CD4-positive, alpha-beta T cell (primary cell): ENCODE measurements at regions of chr21 and their contacts with region 1.

Region 1: GRCh38 chr21:29018540-29018939 is 609 bp downstream of the RWDD2B start:
- DNase-seq: peak in 1 of 14 experiments; percentile 16
- ATAC-seq: peak; percentile 7
- H3K4me3 ChIP-seq: peak overlapping the region; percentile 94
- H3K4me3 Mint-ChIP-seq: peak overlapping the region; percentile 92
- H3K27ac ChIP-seq: peak overlapping the region; percentile 82 to 85
- H3K27ac Mint-ChIP-seq: peak overlapping the region; percentile 93
- H3K4me1 ChIP-seq: peaks cover 40% of the 10 kb centered on the region
- H3K4me1 Mint-ChIP-seq: peaks cover 35% of the 10 kb centered on the region
- H3K27me3 ChIP-seq: no peaks in the 10 kb centered on the region
- H3K27me3 Mint-ChIP-seq: no peaks in the 10 kb centered on the region
- CTCF ChIP-seq: no peak

Region 2: DNA sequence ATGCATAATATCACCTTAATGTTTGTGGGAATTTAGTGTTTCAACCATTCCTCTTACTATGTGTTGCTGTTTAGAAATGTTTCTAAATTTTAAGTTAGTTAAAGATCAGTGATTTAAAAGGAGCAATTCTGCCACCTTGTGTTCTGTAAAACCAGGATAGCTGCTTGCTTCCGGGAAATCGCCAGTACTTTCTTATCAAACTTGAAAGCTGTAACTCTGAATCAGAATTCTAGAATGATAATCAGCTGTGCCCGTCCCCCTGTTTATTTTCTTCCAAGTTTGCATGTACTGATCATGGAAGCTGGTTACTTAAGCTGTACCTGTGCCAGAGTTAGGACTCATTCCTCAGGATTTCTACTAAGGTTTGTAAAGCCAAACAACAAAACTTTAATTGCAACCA is 682.2 kb before region 1 on chr21:
- CTCF ChIA-PET with region 1: no interaction called
- POLR2A ChIA-PET with region 1: no interaction called
- intact Hi-C with region 1: no loop called
- DNase-seq: no peak
- ATAC-seq: no peak
- H3K4me3 ChIP-seq: no peak overlapping the region
- H3K4me3 Mint-ChIP-seq: no peak overlapping the region
- H3K27ac ChIP-seq: no peak overlapping the region
- H3K27ac Mint-ChIP-seq: no peak overlapping the region
- H3K4me1 ChIP-seq: no peaks in the 10 kb centered on the region
- H3K4me1 Mint-ChIP-seq: no peaks in the 10 kb centered on the region
- H3K27me3 ChIP-seq: no peaks in the 10 kb centered on the region
- H3K27me3 Mint-ChIP-seq: no peaks in the 10 kb centered on the region
- CTCF ChIP-seq: no peak

Region 3: DNA sequence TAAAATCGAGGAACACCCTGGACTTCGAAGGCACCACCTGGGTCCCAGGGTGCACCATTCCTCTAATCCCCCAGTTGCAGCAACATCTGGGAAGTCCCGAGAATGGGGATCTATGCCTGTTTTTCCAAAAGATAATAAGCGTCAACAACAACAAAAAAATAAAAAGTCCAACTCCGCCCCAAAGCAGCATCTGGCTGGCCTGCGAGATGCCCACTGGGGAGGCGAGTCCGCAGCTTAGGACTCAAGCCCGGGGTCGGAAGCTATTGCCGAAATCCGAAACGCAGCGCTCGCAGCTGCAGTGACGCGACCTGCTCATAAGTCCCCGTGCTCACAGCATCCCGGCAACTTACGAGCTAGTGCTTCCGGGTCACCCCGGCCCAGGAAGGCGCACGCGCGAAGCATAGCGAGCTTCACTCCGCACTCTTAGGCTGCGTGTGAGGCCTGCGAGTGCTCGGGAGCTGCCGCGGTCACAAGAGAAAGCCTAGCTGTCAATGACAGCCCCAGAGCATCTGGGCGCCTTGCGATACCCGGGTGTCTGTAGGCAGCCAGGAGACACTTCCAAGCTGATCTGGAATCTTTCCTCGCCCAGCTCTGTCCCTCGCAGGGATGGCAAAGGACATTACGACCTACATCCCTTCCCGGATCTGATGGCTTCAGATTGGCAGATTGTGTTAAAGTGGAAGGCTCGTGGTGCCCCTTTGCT is 15.9 kb before region 1 on chr21:
- CTCF ChIA-PET with region 1: interaction called, 3 read pairs
- POLR2A ChIA-PET with region 1: interaction called, 479 read pairs
- intact Hi-C with region 1: loop called (anchors 1 to 2 kb)
- DNase-seq: peak; percentile 91 to 99 (median 94)
- ATAC-seq: peak; percentile 100
- H3K4me3 ChIP-seq: peak overlapping the region; percentile 65
- H3K4me3 Mint-ChIP-seq: peak overlapping the region; percentile 88
- H3K27ac ChIP-seq: peak overlapping the region; percentile 88 to 95
- H3K27ac Mint-ChIP-seq: peak overlapping the region; percentile 97
- H3K4me1 ChIP-seq: peaks cover 13% of the 10 kb centered on the region
- H3K4me1 Mint-ChIP-seq: peaks cover 20% of the 10 kb centered on the region
- H3K27me3 ChIP-seq: no peaks in the 10 kb centered on the region
- H3K27me3 Mint-ChIP-seq: no peaks in the 10 kb centered on the region
- CTCF ChIP-seq: no peak